Ascending aorta (tissue), 2 donors: ENCODE measurements at regions of chr12 and their contacts with region 1.

Region 1: DNA sequence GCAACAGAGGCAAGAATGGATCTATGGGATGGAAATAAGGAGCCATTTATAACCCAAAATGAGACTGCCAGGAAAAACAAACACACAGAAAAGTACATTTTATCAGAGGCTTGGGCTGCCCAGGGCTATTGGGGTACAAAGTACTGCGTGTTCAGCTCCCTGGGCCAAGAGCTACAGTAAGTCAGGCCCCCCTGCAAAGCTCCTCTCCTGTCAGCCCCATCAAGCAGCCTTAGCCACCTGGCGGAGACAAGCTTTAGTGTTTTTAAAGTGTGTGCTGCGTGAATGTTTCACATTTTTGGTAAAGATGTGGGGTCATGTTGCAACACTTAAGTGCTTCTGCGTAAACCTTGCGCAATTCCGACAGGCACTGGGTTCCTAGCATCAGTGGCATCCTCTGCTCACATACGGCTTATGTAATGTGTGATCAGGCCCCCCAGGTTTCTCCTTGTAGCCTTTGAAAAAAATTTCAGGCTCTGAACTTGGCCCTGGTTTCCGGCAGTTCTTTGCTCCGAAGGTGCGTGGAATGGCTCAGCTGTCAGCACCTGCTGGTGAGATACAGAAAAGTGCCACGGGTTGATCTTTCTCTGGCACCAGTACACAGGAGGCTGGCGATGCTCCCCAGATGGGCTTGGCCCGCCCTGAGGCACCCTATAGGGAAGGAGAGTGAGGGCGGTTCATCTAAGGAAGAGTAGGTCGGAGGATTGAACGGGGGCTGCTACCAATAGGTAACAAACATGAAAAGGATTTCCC is 198.7 kb upstream of the EEA1 start:
- DNase-seq: peak; percentile 46 to 93
- H3K4me3 ChIP-seq: peak overlapping the region in 1 of 2 donors; percentile 10
- H3K27ac ChIP-seq: peak overlapping the region; percentile 77 to 81
- H3K4me1 ChIP-seq: peaks cover 3 to 18% of the 10 kb centered on the region in 2 donors
- H3K27me3 ChIP-seq: no peaks in the 10 kb centered on the region
- CTCF ChIP-seq: peak; percentile 54 to 70 (median 60)

Region 2: GRCh38 chr12:92899388-92900001 is 228.3 kb before region 1 on chr12:
- intact Hi-C with region 1: no loop called
- DNase-seq: peak; percentile 28 to 93
- H3K4me3 ChIP-seq: peak overlapping the region; percentile 9 to 33
- H3K27ac ChIP-seq: peak overlapping the region; percentile 73 to 82
- H3K4me1 ChIP-seq: peaks cover 5 to 7% of the 10 kb centered on the region in 2 donors
- H3K27me3 ChIP-seq: no peaks in the 10 kb centered on the region
- CTCF ChIP-seq: no peak

Region 3: DNA sequence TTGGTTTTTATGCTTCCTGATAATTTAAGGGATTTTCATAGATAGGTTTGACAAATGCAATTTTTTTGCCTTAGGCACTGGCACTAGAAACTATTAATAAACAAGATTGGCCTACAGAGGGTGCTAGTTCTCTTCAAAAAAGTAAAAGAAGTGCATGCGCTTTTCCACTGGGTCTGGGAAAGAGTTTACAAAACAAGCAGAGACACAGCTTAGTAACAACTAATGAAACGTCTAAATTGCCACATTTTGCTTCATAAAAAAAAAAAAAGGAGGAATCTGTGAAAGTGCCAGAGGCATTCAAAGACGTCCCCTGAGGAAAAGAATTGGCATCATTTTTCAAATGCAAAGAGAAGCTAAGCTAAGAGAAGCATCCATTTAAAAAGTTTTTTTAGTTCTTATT is 140.4 kb before region 1 on chr12:
- intact Hi-C with region 1: loop called (anchors 5 kb)
- DNase-seq: no peak
- H3K4me3 ChIP-seq: no peak overlapping the region
- H3K27ac ChIP-seq: peak overlapping the region; percentile 46 to 50
- H3K4me1 ChIP-seq: peaks cover 0 to 4% of the 10 kb centered on the region in 2 donors
- H3K27me3 ChIP-seq: no peaks in the 10 kb centered on the region
- CTCF ChIP-seq: peak; percentile 35 to 66 (median 44)

Region 4: GRCh38 chr12:93191956-93192355 is 64.2 kb after region 1 on chr12:
- intact Hi-C with region 1: loop called (anchors 2 kb)
- DNase-seq: peak; percentile 19 to 86
- H3K4me3 ChIP-seq: peak overlapping the region; percentile 28 to 29
- H3K27ac ChIP-seq: peak overlapping the region; percentile 71 to 83
- H3K4me1 ChIP-seq: peaks cover 0 to 17% of the 10 kb centered on the region in 2 donors
- H3K27me3 ChIP-seq: no peaks in the 10 kb centered on the region
- CTCF ChIP-seq: no peak

Region 5: DNA sequence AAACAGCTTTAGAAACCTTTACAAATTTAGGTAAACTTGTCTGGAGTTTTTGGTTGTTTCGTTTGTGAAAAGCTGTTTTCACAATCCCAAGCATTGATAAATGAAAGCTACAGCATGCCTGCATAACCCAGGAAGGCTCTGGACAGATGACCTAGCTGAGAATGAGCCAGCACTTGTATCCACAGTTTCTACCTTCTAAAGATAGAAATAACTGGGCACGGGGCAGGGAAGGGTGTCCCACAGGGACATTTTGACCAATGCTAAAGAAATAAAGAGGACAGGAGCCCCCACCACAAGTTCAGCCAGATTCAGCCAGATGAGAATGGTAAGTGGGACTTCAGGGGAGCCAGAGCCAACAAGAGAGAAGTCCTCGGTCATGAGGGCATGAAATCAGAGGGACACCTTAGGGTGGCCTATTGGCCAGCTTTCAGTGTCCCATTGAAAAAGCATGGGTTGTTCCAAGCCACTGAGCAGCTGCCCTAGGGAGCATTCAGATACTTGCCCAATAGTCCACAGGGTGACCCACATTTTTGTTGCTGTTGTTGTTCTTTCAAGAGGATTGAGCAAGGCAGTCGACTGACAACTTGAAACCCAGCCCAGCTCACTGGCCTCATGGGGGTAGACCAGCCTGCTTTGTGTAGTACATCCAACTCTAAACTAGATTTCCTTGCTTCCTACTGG is 109.6 kb after region 1 on chr12:
- intact Hi-C with region 1: loop called (anchors 5 kb)
- DNase-seq: peak; percentile 66 to 87
- H3K4me3 ChIP-seq: peak overlapping the region in 1 of 2 donors; percentile 3
- H3K27ac ChIP-seq: peak overlapping the region; percentile 66 to 81
- H3K4me1 ChIP-seq: peaks cover 2 to 6% of the 10 kb centered on the region in 2 donors
- H3K27me3 ChIP-seq: no peaks in the 10 kb centered on the region
- CTCF ChIP-seq: no peak

Region 6: GRCh38 chr12:93361151-93361919 is 233.6 kb after region 1 on chr12:
- intact Hi-C with region 1: loop called (anchors 5 kb)
- DNase-seq: peak; percentile 44 to 74
- H3K4me3 ChIP-seq: no peak overlapping the region
- H3K27ac ChIP-seq: peak overlapping the region; percentile 50 to 67
- H3K4me1 ChIP-seq: peaks cover 2 to 40% of the 10 kb centered on the region in 2 donors
- H3K27me3 ChIP-seq: no peaks in the 10 kb centered on the region
- CTCF ChIP-seq: no peak